AG04449 (cell line): ENCODE measurements at regions of chr10 and their contacts with region 1.

Region 1: DNA sequence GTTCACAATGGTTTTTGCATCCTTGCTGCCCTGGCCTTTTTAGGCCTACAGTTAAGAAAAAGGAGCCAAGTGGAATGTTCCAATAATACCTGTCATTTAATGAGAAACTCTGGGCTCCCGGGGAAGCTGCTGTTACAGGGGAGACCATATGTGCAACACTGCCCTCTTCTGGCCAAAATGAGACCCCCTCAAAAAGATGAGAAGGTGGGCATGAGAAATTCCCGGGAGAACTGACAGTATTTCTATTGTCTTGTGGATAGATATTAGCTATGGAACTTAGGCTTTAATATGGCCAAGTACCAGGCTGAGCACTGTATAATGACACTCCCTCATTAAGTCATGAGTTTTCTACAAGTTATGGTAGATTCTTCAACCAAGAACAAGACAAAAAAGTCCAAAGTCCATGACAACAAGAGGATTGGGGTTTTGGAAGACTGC is 99.4 kb downstream of the CCDC3 start:
- DNase-seq: no peak
- H3K4me3 ChIP-seq: no peak overlapping the region
- CTCF ChIP-seq: peak; percentile 67

Region 2: GRCh38 chr10:12214763-12215218 is 687.4 kb before region 1 on chr10:
- CTCF ChIA-PET with region 1: interaction called, 41 read pairs
- POLR2A ChIA-PET with region 1: no interaction called
- DNase-seq: no peak
- H3K4me3 ChIP-seq: no peak overlapping the region
- CTCF ChIP-seq: peak; percentile 17

Region 3: DNA sequence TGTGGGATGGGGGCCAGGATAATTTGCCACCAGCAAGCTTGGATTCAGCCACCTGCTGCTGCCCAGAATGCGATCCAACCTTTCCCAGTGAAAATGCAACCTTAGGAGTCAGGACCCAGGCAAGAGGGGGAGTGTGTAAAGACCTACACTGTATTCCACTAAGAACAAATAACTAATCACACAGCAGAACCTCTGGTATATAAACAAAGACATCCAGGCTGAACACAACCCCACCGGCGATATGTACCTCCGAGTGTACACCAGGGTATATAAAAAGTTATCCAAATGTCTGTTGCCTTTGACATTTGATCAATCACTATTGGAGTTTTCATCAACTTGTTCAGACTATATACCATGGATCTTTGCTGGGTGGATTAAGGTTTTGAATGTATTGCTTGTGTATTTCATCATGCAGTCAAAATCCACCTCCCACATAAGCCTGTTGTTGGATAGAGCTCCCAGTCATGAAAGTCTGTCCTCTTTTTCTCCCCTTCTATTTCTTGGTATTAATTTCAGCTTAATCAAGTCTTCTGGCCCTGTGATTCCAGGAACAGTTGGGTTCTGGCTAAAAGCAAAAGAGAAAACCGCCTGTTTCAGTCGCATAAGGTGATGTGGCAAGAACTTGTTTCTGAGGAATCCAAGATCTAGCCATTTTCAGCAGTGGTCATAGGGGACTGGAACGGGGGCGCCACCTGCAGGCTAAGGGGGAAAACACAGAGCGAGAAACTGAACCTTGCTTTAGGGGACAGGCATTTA is 191.4 kb before region 1 on chr10:
- CTCF ChIA-PET with region 1: interaction called, 10 read pairs
- POLR2A ChIA-PET with region 1: no interaction called
- DNase-seq: peak; percentile 45
- H3K4me3 ChIP-seq: no peak overlapping the region
- CTCF ChIP-seq: peak; percentile 94

Region 4: GRCh38 chr10:12782537-12782936 is 119.6 kb before region 1 on chr10:
- CTCF ChIA-PET with region 1: interaction called, 19 read pairs
- POLR2A ChIA-PET with region 1: no interaction called
- DNase-seq: no peak
- H3K4me3 ChIP-seq: no peak overlapping the region
- CTCF ChIP-seq: peak; percentile 67

Region 5: DNA sequence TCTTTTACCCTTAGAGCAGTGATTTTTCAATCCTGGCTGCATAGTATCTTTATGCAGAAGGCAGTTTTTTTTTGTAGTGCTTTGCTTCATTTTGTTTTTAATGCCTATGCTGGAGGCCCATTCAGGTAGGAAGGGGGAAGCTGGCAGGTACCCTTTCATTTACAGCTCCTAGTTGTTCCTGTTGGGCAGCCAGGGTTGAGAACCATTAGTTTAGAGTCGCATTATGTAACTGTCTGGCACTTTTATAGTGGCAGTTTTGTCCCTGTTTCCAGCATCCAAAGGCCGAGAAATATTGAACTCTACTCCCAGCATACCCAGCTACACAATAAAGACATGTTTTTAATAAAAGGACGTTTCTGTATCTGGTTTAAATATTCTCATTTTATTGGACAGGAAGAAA is 11.2 kb before region 1 on chr10:
- CTCF ChIA-PET with region 1: interaction called, 28 read pairs
- POLR2A ChIA-PET with region 1: no interaction called
- DNase-seq: no peak
- H3K4me3 ChIP-seq: no peak overlapping the region
- CTCF ChIP-seq: no peak

Region 6: GRCh38 chr10:12919574-12919973 is 17.4 kb after region 1 on chr10:
- CTCF ChIA-PET with region 1: interaction called, 14 read pairs
- POLR2A ChIA-PET with region 1: no interaction called
- DNase-seq: no peak
- H3K4me3 ChIP-seq: no peak overlapping the region
- CTCF ChIP-seq: no peak

Region 7: GRCh38 chr10:12949248-12949647 is 47.1 kb after region 1 on chr10:
- CTCF ChIA-PET with region 1: no interaction called
- POLR2A ChIA-PET with region 1: no interaction called
- DNase-seq: no peak
- H3K4me3 ChIP-seq: no peak overlapping the region
- CTCF ChIP-seq: no peak